ENCODE measurements at regions of chr2 and their contacts with region 1.

Region 1: GRCh38 chr2:80506563-80506962 is 202.0 kb upstream of the LRRTM1 start:
- DNase-seq: no peak
- ATAC-seq: peak; percentile 62
- H3K4me3 ChIP-seq: no peak overlapping the region
- H3K27ac ChIP-seq: no peak overlapping the region
- H3K4me1 ChIP-seq: no peaks in the 10 kb centered on the region
- H3K27me3 ChIP-seq: no peaks in the 10 kb centered on the region
- CTCF ChIP-seq: no peak
- EP300 ChIP-seq: no peak
- POLR2A ChIP-seq: no peak
- RAD21 ChIP-seq: no peak

Region 2: DNA sequence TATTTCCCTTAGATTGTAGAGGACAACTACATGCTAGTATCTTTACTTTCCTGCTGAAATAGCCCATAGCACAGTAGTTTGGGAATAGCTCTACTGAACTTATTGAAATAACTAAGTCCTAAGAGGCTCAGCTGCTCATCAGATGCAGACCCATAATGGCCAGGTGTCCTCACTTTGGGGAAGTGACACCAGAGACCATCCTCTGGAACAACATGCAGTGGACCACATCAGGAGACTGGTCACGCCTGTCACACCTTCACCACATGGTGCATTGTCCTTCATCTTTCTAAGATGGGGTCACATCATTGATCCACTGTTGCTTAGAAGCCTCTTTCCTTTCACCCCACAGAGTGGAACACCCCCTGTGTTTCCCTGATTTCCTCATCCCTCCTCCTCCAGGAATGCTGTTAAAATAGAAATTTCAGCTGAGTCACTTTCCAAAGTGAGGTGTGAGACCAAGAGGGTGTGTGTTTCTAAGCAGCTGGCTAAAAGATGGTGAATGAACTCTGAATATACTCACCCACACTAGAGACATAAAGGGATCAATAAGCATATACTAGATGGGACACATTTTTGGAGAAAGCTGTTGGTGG is 13.2 kb after region 1 on chr2:
- CTCF ChIA-PET with region 1: interaction called, 243 read pairs
- POLR2A ChIA-PET with region 1: interaction called, 36 read pairs
- RAD21 ChIA-PET with region 1: interaction called, 276 read pairs
- SMC1A ChIA-PET with region 1: interaction called, 360 read pairs
- in situ Hi-C with region 1: no loop called
- intact Hi-C with region 1: no loop called
- DNase-seq: no peak
- ATAC-seq: peak; percentile 68
- H3K4me3 ChIP-seq: no peak overlapping the region
- H3K27ac ChIP-seq: no peak overlapping the region
- H3K4me1 ChIP-seq: peaks cover 17% of the 10 kb centered on the region
- H3K27me3 ChIP-seq: no peaks in the 10 kb centered on the region
- CTCF ChIP-seq: no peak
- EP300 ChIP-seq: 0 out of 4 replicates have a peak, but pooled peaks of 1 of the 2 experiments have one; percentile 10
- POLR2A ChIP-seq: no peak
- RAD21 ChIP-seq: no peak

Measured in GM12878 (cell line).